ENCODE measurements at regions of chr3 and their contacts with region 1.

Region 1: DNA sequence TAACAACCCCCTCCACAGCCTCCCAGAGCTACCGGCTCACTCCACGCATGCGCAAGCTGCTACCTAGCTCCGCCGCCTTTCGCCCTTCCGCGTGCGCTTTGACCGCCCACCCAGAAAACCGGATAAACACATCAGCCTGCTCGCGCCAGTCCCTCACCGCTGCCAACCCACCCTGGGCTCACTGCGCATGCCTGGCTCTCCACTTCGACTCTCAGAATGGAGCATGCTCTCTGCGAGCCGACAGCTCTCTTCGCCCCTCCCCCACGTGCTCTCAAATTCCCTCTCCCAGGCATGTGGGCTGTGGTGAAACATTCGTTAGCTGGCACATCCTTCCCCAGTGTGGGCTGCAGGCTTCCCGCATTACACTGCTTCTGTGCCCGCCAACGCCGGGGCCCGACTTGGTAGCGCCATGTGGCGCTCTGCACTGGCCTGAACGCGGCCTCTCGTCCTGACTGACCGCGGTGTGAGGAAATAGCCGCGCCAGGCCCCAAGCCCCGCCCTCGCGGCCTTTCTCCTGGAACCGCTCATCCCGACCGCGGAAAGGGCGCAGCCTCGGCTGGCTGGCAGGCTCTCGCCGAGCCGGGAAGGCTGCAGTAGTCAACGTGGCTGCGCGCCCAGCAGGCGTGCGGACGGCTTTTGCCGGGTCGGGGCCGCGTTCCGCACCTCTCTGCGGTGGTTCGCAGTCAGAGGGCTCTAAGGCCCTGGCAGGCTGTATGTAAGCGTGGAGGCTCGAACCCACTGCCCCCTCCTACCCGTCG is 445 bp upstream of the MSL2 start:
- DNase-seq: peak; percentile 94 to 99 (median 98)
- ATAC-seq: peak; percentile 73
- H3K4me3 ChIP-seq: peak overlapping the region; percentile 77
- H3K4me3 Mint-ChIP-seq: peak overlapping the region; percentile 91 to 99 (median 98)
- H3K27ac ChIP-seq: peak overlapping the region; percentile 94
- H3K27ac Mint-ChIP-seq: peak overlapping the region; percentile 96 to 100 (median 99)
- H3K4me1 ChIP-seq: peaks cover 6 to 11% of the 10 kb centered on the region in 2 donors
- H3K4me1 Mint-ChIP-seq: peaks cover 20 to 38% (median 35%) of the 10 kb centered on the region in 7 donors
- H3K27me3 ChIP-seq: no peaks in the 10 kb centered on the region
- H3K27me3 Mint-ChIP-seq: peaks cover 0 to 7% (median 0%) of the 10 kb centered on the region in 5 donors

Region 2: GRCh38 chr3:134485718-134486576 is 1710.6 kb before region 1 on chr3 and contains the starts of genes ANAPC13 and CEP63:
- CTCF ChIA-PET with region 1: no interaction called
- POLR2A ChIA-PET with region 1: interaction called, 3 read pairs
- intact Hi-C with region 1: loop called in 1 of 2 experiments (anchors 1 kb)
- DNase-seq: peak; percentile 84 to 96 (median 96)
- ATAC-seq: peak; percentile 89
- H3K4me3 ChIP-seq: peak within 1 kb of the TSS; percentile 84
- H3K4me3 Mint-ChIP-seq: peak within 1 kb of the TSS; percentile 89 to 100 (median 99)
- H3K27ac ChIP-seq: peak within 1 kb of the TSS; percentile 87
- H3K27ac Mint-ChIP-seq: peak within 1 kb of the TSS; percentile 94 to 100 (median 99)
- H3K4me1 ChIP-seq: peaks cover 20 to 23% of the 10 kb centered on the region in 2 donors
- H3K4me1 Mint-ChIP-seq: peaks cover 41 to 80% (median 69%) of the 10 kb centered on the region in 7 donors
- H3K27me3 ChIP-seq: no peaks in the 10 kb centered on the region
- H3K27me3 Mint-ChIP-seq: no peaks in the 10 kb centered on the region
- total RNA-seq, gene ANAPC13: 21.2 to 36.7 (median 25.0) TPM
- total RNA-seq, gene CEP63: 21.1 to 42.3 (median 26.4) TPM

Region 3: GRCh38 chr3:136093771-136094170 is 102.8 kb before region 1 on chr3:
- CTCF ChIA-PET with region 1: no interaction called
- POLR2A ChIA-PET with region 1: no interaction called
- intact Hi-C with region 1: loop called in 1 of 2 experiments (anchors 5 kb)
- DNase-seq: no peak
- ATAC-seq: no peak
- H3K4me3 ChIP-seq: no peak overlapping the region
- H3K4me3 Mint-ChIP-seq: no peak overlapping the region
- H3K27ac ChIP-seq: no peak overlapping the region
- H3K27ac Mint-ChIP-seq: no peak overlapping the region
- H3K4me1 ChIP-seq: no peaks in the 10 kb centered on the region
- H3K4me1 Mint-ChIP-seq: peaks cover 0 to 1% (median 0%) of the 10 kb centered on the region in 7 donors
- H3K27me3 ChIP-seq: no peaks in the 10 kb centered on the region
- H3K27me3 Mint-ChIP-seq: peaks cover 5 to 9% (median 6%) of the 10 kb centered on the region in 5 donors

Region 4: DNA sequence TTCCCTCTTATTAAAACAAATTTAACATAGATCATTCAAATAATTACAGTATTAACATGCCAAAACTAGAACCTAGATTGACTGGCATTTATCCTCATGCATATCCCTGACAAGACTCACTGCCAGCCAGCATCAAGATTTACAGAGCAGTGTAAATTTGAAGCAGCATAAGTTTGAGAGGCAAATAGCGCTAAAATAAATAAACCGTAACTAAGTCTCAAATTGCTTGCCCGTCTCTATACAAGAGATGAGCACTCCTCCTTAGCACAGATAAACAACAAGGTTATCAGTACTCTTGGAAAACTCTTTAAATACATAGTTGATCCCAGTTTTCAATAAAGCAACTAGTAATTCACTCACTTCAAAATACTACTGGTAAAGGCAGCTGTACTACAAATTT is 30.1 kb before region 1 on chr3:
- CTCF ChIA-PET with region 1: interaction called, 4 read pairs
- POLR2A ChIA-PET with region 1: interaction called, 8 read pairs
- intact Hi-C with region 1: loop called in 1 of 2 experiments (anchors 1 kb)
- DNase-seq: no peak
- ATAC-seq: no peak
- H3K4me3 ChIP-seq: no peak overlapping the region
- H3K4me3 Mint-ChIP-seq: peak overlapping the region in 8 of 10 donors; percentile 34 to 81 (median 63)
- H3K27ac ChIP-seq: no peak overlapping the region
- H3K27ac Mint-ChIP-seq: peak overlapping the region in 6 of 9 donors; percentile 27 to 74 (median 62)
- H3K4me1 ChIP-seq: peaks cover 40 to 56% of the 10 kb centered on the region in 2 donors
- H3K4me1 Mint-ChIP-seq: peaks cover 39 to 77% (median 70%) of the 10 kb centered on the region in 7 donors
- H3K27me3 ChIP-seq: no peaks in the 10 kb centered on the region
- H3K27me3 Mint-ChIP-seq: no peaks in the 10 kb centered on the region

Region 5: GRCh38 chr3:136207489-136208115 is 11.0 kb after region 1 on chr3:
- CTCF ChIA-PET with region 1: interaction called, 4 read pairs
- POLR2A ChIA-PET with region 1: interaction called, 11 read pairs
- intact Hi-C with region 1: no loop called
- DNase-seq: no peak
- ATAC-seq: no peak
- H3K4me3 ChIP-seq: no peak overlapping the region
- H3K4me3 Mint-ChIP-seq: no peak overlapping the region
- H3K27ac ChIP-seq: no peak overlapping the region
- H3K27ac Mint-ChIP-seq: no peak overlapping the region
- H3K4me1 ChIP-seq: no peaks in the 10 kb centered on the region
- H3K4me1 Mint-ChIP-seq: peaks cover 0 to 2% (median 0%) of the 10 kb centered on the region in 7 donors
- H3K27me3 ChIP-seq: no peaks in the 10 kb centered on the region
- H3K27me3 Mint-ChIP-seq: peaks cover 0 to 54% (median 11%) of the 10 kb centered on the region in 5 donors

Region 6: DNA sequence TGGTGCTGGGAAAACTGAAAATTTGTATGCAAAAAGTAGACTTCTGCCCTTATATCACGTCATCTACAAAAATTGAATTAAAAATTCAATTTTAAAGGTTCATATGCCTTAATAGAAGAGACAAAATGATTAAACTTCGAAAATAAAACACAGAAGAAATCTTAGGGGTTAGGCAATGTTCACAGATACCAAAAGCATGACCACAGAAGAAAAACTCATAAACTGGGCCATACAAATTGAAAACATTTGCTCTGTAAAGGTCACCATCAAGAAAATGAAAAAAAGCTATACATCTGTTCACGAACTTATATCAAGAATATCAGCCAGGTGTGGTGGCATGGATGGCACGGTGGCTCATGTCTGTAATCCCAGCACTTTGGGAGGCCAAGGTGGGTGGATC is 298.6 kb after region 1 on chr3:
- CTCF ChIA-PET with region 1: no interaction called
- POLR2A ChIA-PET with region 1: no interaction called
- intact Hi-C with region 1: no loop called
- DNase-seq: no peak
- ATAC-seq: no peak
- H3K4me3 ChIP-seq: no peak overlapping the region
- H3K4me3 Mint-ChIP-seq: no peak overlapping the region
- H3K27ac ChIP-seq: no peak overlapping the region
- H3K27ac Mint-ChIP-seq: no peak overlapping the region
- H3K4me1 ChIP-seq: no peaks in the 10 kb centered on the region
- H3K4me1 Mint-ChIP-seq: peaks cover 0 to 3% (median 0%) of the 10 kb centered on the region in 7 donors
- H3K27me3 ChIP-seq: no peaks in the 10 kb centered on the region
- H3K27me3 Mint-ChIP-seq: no peaks in the 10 kb centered on the region

Region 7: DNA sequence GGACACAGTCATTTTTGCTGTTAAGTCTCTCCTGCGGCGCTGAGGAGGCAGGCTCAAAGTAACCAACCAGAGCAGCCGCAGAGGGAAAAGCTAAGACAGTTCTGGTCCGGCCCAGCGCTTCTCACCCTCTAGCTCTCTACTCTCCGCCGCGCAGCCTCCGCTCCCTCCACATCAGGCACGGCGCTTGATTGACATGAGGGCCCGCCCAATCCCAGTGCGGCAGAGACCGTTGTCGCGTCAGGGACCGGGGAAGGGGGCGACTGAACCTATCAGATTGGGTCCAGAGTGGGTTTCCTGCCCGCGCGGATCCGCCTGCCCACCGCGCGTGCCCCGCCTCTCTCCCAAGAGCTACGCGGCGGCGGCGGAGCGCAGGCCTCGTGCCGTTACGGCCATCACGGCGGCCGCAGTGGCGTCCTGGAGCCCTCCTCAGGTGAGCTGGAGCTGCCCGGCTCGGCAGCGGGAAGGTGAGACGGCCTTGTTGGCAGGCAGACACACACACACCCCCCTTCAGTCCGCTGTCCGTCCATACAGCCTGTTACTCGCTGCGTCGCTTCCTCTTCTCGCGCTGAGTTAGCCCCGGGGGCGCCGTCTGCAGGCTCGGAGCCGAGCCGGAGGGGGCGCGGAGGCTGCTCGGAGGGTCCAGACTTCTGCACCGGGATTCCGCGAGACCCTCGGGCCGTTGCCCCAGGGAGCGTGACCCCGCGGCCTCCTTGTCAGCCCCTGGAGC is 665.5 kb after region 1 on chr3 and contains the start of gene NCK1:
- CTCF ChIA-PET with region 1: interaction called, 3 read pairs
- POLR2A ChIA-PET with region 1: interaction called, 34 read pairs
- intact Hi-C with region 1: loop called (anchors 1 kb)
- DNase-seq: peak; percentile 89 to 99 (median 98)
- ATAC-seq: peak; percentile 97
- H3K4me3 ChIP-seq: peak within 1 kb of the TSS; percentile 85
- H3K4me3 Mint-ChIP-seq: peak within 1 kb of the TSS; percentile 91 to 99 (median 94)
- H3K27ac ChIP-seq: peak within 1 kb of the TSS; percentile 93
- H3K27ac Mint-ChIP-seq: peak within 1 kb of the TSS; percentile 93 to 99 (median 97)
- H3K4me1 ChIP-seq: peaks cover 20 to 25% of the 10 kb centered on the region in 2 donors
- H3K4me1 Mint-ChIP-seq: peaks cover 32 to 74% (median 64%) of the 10 kb centered on the region in 7 donors
- H3K27me3 ChIP-seq: no peaks in the 10 kb centered on the region
- H3K27me3 Mint-ChIP-seq: no peaks in the 10 kb centered on the region
- total RNA-seq, gene NCK1: 41.1 to 59.6 (median 47.3) TPM

Region 8: GRCh38 chr3:138174421-138175122 is 1978.0 kb after region 1 on chr3 and contains the start of gene DBR1:
- CTCF ChIA-PET with region 1: no interaction called
- POLR2A ChIA-PET with region 1: interaction called, 4 read pairs
- intact Hi-C with region 1: loop called in 1 of 2 experiments (anchors 2 kb)
- DNase-seq: peak; percentile 51 to 81 (median 74)
- ATAC-seq: peak; percentile 91
- H3K4me3 ChIP-seq: peak within 1 kb of the TSS; percentile 79
- H3K4me3 Mint-ChIP-seq: peak within 1 kb of the TSS; percentile 87 to 99 (median 98)
- H3K27ac ChIP-seq: peak within 1 kb of the TSS; percentile 80
- H3K27ac Mint-ChIP-seq: peak within 1 kb of the TSS; percentile 96 to 99 (median 97)
- H3K4me1 ChIP-seq: peaks cover 20 to 22% of the 10 kb centered on the region in 2 donors
- H3K4me1 Mint-ChIP-seq: peaks cover 22 to 56% (median 45%) of the 10 kb centered on the region in 7 donors
- H3K27me3 ChIP-seq: no peaks in the 10 kb centered on the region
- H3K27me3 Mint-ChIP-seq: peaks cover 0 to 9% (median 0%) of the 10 kb centered on the region in 5 donors
- total RNA-seq, gene DBR1: 15.4 to 28.2 (median 20.8) TPM